ENCODE measurements at regions of chr19 and their contacts with region 1.

Region 1: DNA sequence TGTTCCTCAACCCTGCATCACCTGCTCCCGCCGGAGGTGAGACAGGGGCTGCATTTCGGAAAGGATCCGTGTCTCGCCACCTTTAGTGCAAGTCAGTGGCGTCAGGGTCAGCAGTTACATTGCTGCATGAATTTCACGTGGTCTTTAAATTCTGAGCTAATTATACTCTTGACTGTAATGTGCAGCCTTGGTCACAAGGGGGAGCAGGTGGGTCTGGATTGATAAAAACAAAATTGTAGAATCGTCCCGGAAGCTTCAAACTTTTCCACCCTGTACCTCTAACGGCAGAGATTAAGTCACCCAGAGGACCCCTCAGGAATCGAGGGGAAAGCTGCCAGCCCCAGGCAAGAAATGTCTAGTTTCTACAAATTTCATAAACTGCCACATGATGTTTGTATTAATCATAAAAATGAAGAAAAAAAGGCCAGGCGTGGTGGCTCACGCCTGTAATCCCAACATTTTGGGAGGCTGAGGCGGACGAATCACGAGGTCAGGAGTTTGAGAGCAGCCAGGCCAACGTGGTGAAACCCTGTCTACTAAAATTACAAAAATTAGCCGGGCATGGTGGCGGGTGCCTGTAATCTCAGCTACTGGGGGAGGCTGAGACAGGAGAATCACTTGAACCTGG is 20.2 kb downstream of the BBC3 start:
- DNase-seq: peak; percentile 89
- ATAC-seq: peak; percentile 87
- H3K4me3 Mint-ChIP-seq: no peak overlapping the region
- H3K27ac Mint-ChIP-seq: peak overlapping the region; percentile 91
- H3K4me1 Mint-ChIP-seq: peaks cover 9% of the 10 kb centered on the region
- H3K27me3 Mint-ChIP-seq: no peaks in the 10 kb centered on the region

Region 2: GRCh38 chr19:47145639-47146486 is 64.9 kb before region 1 on chr19:
- CTCF ChIA-PET with region 1: interaction called, 38 read pairs
- POLR2A ChIA-PET with region 1: interaction called, 3 read pairs
- intact Hi-C with region 1: loop called in 1 of 2 experiments (anchors 1 kb)
- DNase-seq: no peak
- ATAC-seq: peak; percentile 24
- H3K4me3 Mint-ChIP-seq: no peak overlapping the region
- H3K27ac Mint-ChIP-seq: peak overlapping the region; percentile 89
- H3K4me1 Mint-ChIP-seq: peaks cover 83% of the 10 kb centered on the region
- H3K27me3 Mint-ChIP-seq: no peaks in the 10 kb centered on the region

Region 3: GRCh38 chr19:47152224-47153017 is 58.4 kb before region 1 on chr19:
- CTCF ChIA-PET with region 1: interaction called, 38 read pairs
- POLR2A ChIA-PET with region 1: interaction called, 3 read pairs
- intact Hi-C with region 1: loop called in 1 of 2 experiments (anchors 1 kb)
- DNase-seq: no peak
- ATAC-seq: no peak
- H3K4me3 Mint-ChIP-seq: no peak overlapping the region
- H3K27ac Mint-ChIP-seq: no peak overlapping the region
- H3K4me1 Mint-ChIP-seq: peaks cover 55% of the 10 kb centered on the region
- H3K27me3 Mint-ChIP-seq: no peaks in the 10 kb centered on the region

Region 4: GRCh38 chr19:47157431-47158321 is 53.1 kb before region 1 on chr19:
- CTCF ChIA-PET with region 1: interaction called, 36 read pairs
- POLR2A ChIA-PET with region 1: interaction called, 7 read pairs
- intact Hi-C with region 1: no loop called
- DNase-seq: peak; percentile 54
- ATAC-seq: no peak
- H3K4me3 Mint-ChIP-seq: peak overlapping the region; percentile 58
- H3K27ac Mint-ChIP-seq: peak overlapping the region; percentile 93
- H3K4me1 Mint-ChIP-seq: peaks cover 75% of the 10 kb centered on the region
- H3K27me3 Mint-ChIP-seq: no peaks in the 10 kb centered on the region

Region 5: GRCh38 chr19:47197141-47197540 is 13.7 kb before region 1 on chr19:
- CTCF ChIA-PET with region 1: interaction called, 24 read pairs
- POLR2A ChIA-PET with region 1: no interaction called
- intact Hi-C with region 1: no loop called
- DNase-seq: no peak
- ATAC-seq: no peak
- H3K4me3 Mint-ChIP-seq: no peak overlapping the region
- H3K27ac Mint-ChIP-seq: no peak overlapping the region
- H3K4me1 Mint-ChIP-seq: peaks cover 13% of the 10 kb centered on the region
- H3K27me3 Mint-ChIP-seq: no peaks in the 10 kb centered on the region

Region 6: GRCh38 chr19:47225746-47226425 is 15.1 kb after region 1 on chr19:
- CTCF ChIA-PET with region 1: interaction called, 20 read pairs
- POLR2A ChIA-PET with region 1: interaction called, 10 read pairs
- intact Hi-C with region 1: no loop called
- DNase-seq: peak; percentile 93
- ATAC-seq: peak; percentile 70
- H3K4me3 Mint-ChIP-seq: peak overlapping the region; percentile 77
- H3K27ac Mint-ChIP-seq: no peak overlapping the region
- H3K4me1 Mint-ChIP-seq: peaks cover 16% of the 10 kb centered on the region
- H3K27me3 Mint-ChIP-seq: no peaks in the 10 kb centered on the region